ENCODE measurements at regions of chr5 and their contacts with region 1.

Region 1: GRCh38 chr5:154857530-154858296 is 714 bp upstream of the CNOT8 start:
- DNase-seq: peak; percentile 88
- H3K4me3 Mint-ChIP-seq: peak overlapping the region; percentile 86
- H3K27ac Mint-ChIP-seq: peak overlapping the region; percentile 100
- H3K4me1 Mint-ChIP-seq: peaks cover 38% of the 10 kb centered on the region
- H3K27me3 Mint-ChIP-seq: no peaks in the 10 kb centered on the region

Region 2: GRCh38 chr5:154038707-154039457 is 818.8 kb before region 1 on chr5 and contains the starts of genes FAM114A2 and MFAP3:
- CTCF ChIA-PET with region 1: no interaction called
- POLR2A ChIA-PET with region 1: no interaction called
- intact Hi-C with region 1: loop called (anchors 2 kb)
- DNase-seq: peak; percentile 93
- H3K4me3 Mint-ChIP-seq: peak within 1 kb of the TSS; percentile 98
- H3K27ac Mint-ChIP-seq: peak within 1 kb of the TSS; percentile 93
- H3K4me1 Mint-ChIP-seq: peaks cover 47% of the 10 kb centered on the region
- H3K27me3 Mint-ChIP-seq: no peaks in the 10 kb centered on the region
- total RNA-seq, gene FAM114A2: 27.4 to 27.8 TPM
- total RNA-seq, gene MFAP3: 10.0 to 11.1 TPM

Region 3: GRCh38 chr5:154129013-154129412 is 728.7 kb before region 1 on chr5:
- CTCF ChIA-PET with region 1: no interaction called
- POLR2A ChIA-PET with region 1: no interaction called
- intact Hi-C with region 1: no loop called
- DNase-seq: no peak
- H3K4me3 Mint-ChIP-seq: no peak overlapping the region
- H3K27ac Mint-ChIP-seq: no peak overlapping the region
- H3K4me1 Mint-ChIP-seq: no peaks in the 10 kb centered on the region
- H3K27me3 Mint-ChIP-seq: peaks cover 7% of the 10 kb centered on the region

Region 4: DNA sequence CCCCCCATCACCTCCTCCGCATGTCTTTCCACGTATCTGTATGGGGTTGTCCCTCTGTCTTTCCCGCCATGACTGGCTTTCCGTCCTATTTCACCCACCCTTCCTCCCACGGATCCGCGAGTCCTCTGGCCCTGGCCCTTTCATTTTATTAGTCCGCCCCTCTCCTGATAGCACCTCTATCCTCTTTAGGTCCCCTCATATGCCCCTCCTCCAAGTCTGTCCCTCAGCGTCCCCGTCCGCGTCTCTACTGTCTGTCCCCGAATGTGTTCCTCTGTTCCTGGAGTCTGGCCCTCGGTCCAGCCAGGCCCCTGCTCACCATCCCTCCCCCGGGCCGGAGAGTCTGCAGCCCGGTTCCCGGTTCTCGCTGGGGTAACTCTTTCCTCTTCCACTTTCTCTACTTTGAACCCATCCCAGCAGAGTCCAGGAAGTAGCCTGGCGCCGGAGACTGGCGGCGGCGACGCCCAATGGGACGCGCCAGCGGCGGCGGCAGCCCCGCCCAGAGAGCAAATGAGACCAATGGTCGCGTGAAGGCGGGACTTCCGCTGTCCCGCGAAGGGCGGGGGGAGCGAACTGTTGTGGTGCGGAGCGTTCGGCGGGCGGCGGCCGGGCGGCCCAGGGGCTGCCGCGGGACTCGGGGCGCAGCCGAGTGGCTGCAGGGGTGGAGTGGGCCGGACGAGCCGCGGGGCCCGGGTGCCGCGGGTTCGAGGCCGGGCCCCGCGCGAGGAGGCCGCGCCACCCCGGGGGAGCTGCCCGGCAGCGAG is 412.1 kb before region 1 on chr5 and contains the start of gene SAP30L:
- CTCF ChIA-PET with region 1: no interaction called
- POLR2A ChIA-PET with region 1: interaction called, 3 read pairs
- intact Hi-C with region 1: loop called (anchors 1 kb)
- DNase-seq: peak; percentile 97
- H3K4me3 Mint-ChIP-seq: peak within 1 kb of the TSS; percentile 99
- H3K27ac Mint-ChIP-seq: peak within 1 kb of the TSS; percentile 94
- H3K4me1 Mint-ChIP-seq: peaks cover 45% of the 10 kb centered on the region
- H3K27me3 Mint-ChIP-seq: no peaks in the 10 kb centered on the region
- total RNA-seq, gene SAP30L: 32.0 to 34.2 TPM

Region 5: DNA sequence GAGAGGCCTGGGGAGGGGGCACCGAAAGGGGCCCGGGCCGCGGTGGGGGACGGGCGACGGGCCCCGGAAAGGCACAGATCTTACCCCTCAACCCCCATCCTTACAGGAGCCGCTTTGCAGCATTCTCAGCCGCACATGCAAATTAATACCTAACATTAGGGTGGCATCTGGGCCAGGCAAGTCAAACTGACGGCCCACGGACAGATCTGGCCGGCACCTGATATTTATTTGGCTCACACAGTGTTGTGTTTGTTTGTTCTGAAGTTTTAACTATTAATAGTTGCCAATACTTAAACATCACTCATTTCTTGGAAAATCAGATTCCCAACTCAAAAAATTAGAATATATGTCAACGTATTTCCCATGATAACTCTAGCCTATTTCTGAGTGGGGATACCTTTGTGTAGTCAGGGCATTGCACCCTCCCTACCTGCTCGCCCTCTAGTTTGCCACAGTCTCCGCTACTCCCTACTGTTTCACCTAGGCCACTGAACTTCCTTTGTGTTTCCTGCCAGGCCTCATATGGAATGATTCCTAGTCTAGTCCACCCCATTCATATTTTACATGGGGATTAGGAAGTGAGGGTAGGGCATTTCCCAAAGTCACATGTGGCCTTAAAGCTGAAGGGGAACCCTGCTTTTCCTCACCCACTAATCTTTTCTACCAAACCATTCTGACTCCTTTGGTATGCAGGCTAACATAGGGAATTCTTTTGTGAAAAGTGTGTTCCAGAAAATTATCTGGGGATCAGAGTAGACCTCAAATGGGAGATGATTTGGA is 174.4 kb before region 1 on chr5:
- CTCF ChIA-PET with region 1: no interaction called
- POLR2A ChIA-PET with region 1: no interaction called
- intact Hi-C with region 1: loop called (anchors 10 kb)
- DNase-seq: no peak
- H3K4me3 Mint-ChIP-seq: peak overlapping the region; percentile 32
- H3K27ac Mint-ChIP-seq: no peak overlapping the region
- H3K4me1 Mint-ChIP-seq: peaks cover 6% of the 10 kb centered on the region
- H3K27me3 Mint-ChIP-seq: peaks cover 6% of the 10 kb centered on the region

Region 6: DNA sequence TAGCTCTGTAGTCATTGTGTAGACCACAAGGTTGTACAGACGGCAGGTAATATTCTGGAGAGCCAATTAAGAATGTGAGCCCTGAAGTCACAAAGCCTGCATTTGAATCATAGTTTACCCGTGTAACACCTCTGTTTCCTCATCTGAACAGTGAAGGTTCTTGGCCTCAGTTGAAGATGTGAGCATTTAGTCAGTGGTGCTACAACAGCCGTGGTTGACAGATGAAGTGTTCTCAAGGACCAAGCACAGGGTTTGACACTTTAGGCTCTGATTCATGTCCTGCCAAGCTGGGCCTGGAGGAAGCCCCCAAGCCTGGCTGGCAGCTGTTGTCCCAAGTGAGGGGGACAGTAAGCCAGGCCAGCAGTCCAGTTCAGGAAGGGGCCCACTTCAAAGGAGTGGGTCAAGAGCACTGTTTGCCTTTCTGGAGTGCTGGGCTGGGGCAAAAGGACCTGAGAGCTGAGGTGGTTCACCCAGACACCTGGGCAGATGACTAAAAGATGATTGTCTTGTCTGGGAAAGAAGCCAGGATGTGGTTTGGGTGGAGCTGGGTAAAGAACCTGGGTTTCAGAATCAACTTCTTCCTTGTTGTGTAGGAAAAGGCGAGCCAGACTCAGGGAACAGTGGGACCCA is 28.0 kb before region 1 on chr5:
- CTCF ChIA-PET with region 1: interaction called, 4 read pairs
- POLR2A ChIA-PET with region 1: no interaction called
- intact Hi-C with region 1: loop called (anchors 1 kb)
- DNase-seq: peak; percentile 61
- H3K4me3 Mint-ChIP-seq: no peak overlapping the region
- H3K27ac Mint-ChIP-seq: peak overlapping the region; percentile 89
- H3K4me1 Mint-ChIP-seq: peaks cover 37% of the 10 kb centered on the region
- H3K27me3 Mint-ChIP-seq: no peaks in the 10 kb centered on the region

Region 7: DNA sequence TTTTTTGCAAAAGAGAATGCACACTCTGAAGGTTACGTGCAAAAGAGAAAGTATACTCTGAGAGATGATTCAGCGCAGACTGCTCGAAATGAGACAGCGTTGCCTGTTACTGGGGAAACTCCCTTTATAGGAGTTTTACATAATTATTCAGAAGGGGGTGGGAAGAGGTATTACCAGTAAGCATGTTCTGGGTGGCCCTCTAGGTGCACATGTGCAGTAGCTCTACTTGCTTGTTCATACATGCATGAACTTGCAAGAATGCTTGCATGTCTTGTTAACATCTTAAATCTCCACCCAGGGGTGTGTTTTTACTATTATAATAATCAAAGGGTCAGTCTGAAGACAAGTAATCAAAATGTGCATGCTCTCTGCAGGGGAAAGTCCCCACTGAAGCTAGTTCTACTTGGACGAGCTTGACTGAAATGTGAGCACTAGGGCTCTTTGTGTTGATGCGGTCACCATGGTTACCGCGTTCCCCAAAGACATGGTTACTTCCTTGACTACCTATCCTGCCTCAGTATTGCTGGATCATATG is 1544.7 kb after region 1 on chr5:
- CTCF ChIA-PET with region 1: no interaction called
- POLR2A ChIA-PET with region 1: no interaction called
- intact Hi-C with region 1: loop called (anchors 5 kb)
- DNase-seq: peak; percentile 84
- H3K4me3 Mint-ChIP-seq: peak overlapping the region; percentile 13
- H3K27ac Mint-ChIP-seq: peak overlapping the region; percentile 21
- H3K4me1 Mint-ChIP-seq: peaks cover 16% of the 10 kb centered on the region
- H3K27me3 Mint-ChIP-seq: peaks cover 6% of the 10 kb centered on the region